Activated CD4-positive, alpha-beta T cell treated with anti-CD3 and anti-CD28 coated beads for 36 hours (primary cell): ENCODE measurements at regions of chr10 and their contacts with region 1.

Region 1: GRCh38 chr10:14499601-14499904 is 168.8 kb upstream of the FRMD4A start:
- DNase-seq: no peak
- ATAC-seq: no peak
- H3K4me3 Mint-ChIP-seq: no peak overlapping the region
- H3K27ac Mint-ChIP-seq: no peak overlapping the region
- H3K4me1 Mint-ChIP-seq: peaks cover 14% of the 10 kb centered on the region
- H3K27me3 Mint-ChIP-seq: no peaks in the 10 kb centered on the region

Region 2: GRCh38 chr10:13978533-13979115 is 520.9 kb before region 1 on chr10:
- CTCF ChIA-PET with region 1: no interaction called
- POLR2A ChIA-PET with region 1: no interaction called
- intact Hi-C with region 1: no loop called
- DNase-seq: no peak
- ATAC-seq: no peak
- H3K4me3 Mint-ChIP-seq: no peak overlapping the region
- H3K27ac Mint-ChIP-seq: no peak overlapping the region
- H3K4me1 Mint-ChIP-seq: no peaks in the 10 kb centered on the region
- H3K27me3 Mint-ChIP-seq: no peaks in the 10 kb centered on the region

Region 3: GRCh38 chr10:14543046-14543903 is 43.7 kb after region 1 on chr10:
- CTCF ChIA-PET with region 1: interaction called, 26 read pairs
- POLR2A ChIA-PET with region 1: no interaction called
- intact Hi-C with region 1: loop called (anchors 1 to 2 kb)
- DNase-seq: peak; percentile 60
- ATAC-seq: peak; percentile 81
- H3K4me3 Mint-ChIP-seq: peak overlapping the region; percentile 62
- H3K27ac Mint-ChIP-seq: peak overlapping the region; percentile 90
- H3K4me1 Mint-ChIP-seq: peaks cover 79% of the 10 kb centered on the region
- H3K27me3 Mint-ChIP-seq: no peaks in the 10 kb centered on the region

Region 4: GRCh38 chr10:14556285-14556956 is 56.9 kb after region 1 on chr10:
- CTCF ChIA-PET with region 1: no interaction called
- POLR2A ChIA-PET with region 1: no interaction called
- intact Hi-C with region 1: no loop called
- DNase-seq: peak; percentile 48
- ATAC-seq: peak; percentile 37
- H3K4me3 Mint-ChIP-seq: peak overlapping the region; percentile 17
- H3K27ac Mint-ChIP-seq: peak overlapping the region; percentile 86
- H3K4me1 Mint-ChIP-seq: peaks cover 93% of the 10 kb centered on the region
- H3K27me3 Mint-ChIP-seq: no peaks in the 10 kb centered on the region

Region 5: GRCh38 chr10:14770927-14771326 is 271.4 kb after region 1 on chr10:
- CTCF ChIA-PET with region 1: no interaction called
- POLR2A ChIA-PET with region 1: no interaction called
- intact Hi-C with region 1: no loop called
- DNase-seq: no peak
- ATAC-seq: no peak
- H3K4me3 Mint-ChIP-seq: no peak overlapping the region
- H3K27ac Mint-ChIP-seq: no peak overlapping the region
- H3K4me1 Mint-ChIP-seq: no peaks in the 10 kb centered on the region
- H3K27me3 Mint-ChIP-seq: no peaks in the 10 kb centered on the region

Region 6: GRCh38 chr10:14971867-14972448 is 472.4 kb after region 1 on chr10:
- CTCF ChIA-PET with region 1: no interaction called
- POLR2A ChIA-PET with region 1: no interaction called
- intact Hi-C with region 1: loop called in 1 of 2 experiments (anchors 1 kb)
- DNase-seq: peak; percentile 71
- ATAC-seq: peak; percentile 49
- H3K4me3 Mint-ChIP-seq: no peak overlapping the region
- H3K27ac Mint-ChIP-seq: no peak overlapping the region
- H3K4me1 Mint-ChIP-seq: no peaks in the 10 kb centered on the region
- H3K27me3 Mint-ChIP-seq: peaks cover 16% of the 10 kb centered on the region